CD8-positive, alpha-beta memory T cell (primary cell): ENCODE measurements at regions of chr19 and their contacts with region 1.

Region 1: DNA sequence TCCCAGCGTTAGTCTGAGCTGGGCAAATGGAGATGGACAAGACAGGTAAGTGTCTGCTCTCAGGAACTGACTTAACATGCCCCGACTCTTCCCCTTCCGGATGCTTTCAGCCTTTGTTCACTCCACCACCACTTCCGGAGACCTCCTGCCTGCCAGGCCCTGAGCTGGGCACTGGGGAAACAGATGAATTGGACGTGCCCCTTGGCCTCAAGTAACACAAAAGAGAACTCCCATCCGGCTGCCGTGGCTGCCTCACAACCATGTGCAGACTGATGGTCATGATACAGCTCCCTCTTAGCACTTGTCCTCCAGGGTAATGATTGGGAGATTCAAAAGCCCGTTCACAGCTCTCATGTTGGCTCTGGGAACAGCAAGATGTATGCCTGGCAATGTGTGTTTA is 6.9 kb downstream of the ZNF784 start:
- DNase-seq: no peak
- H3K4me3 ChIP-seq: no peak overlapping the region
- H3K4me3 Mint-ChIP-seq: no peak overlapping the region
- H3K27ac ChIP-seq: no peak overlapping the region
- H3K27ac Mint-ChIP-seq: peak overlapping the region in 2 of 8 donors; percentile 26 to 80
- H3K4me1 ChIP-seq: peaks cover 11% of the 10 kb centered on the region
- H3K4me1 Mint-ChIP-seq: peaks cover 18 to 30% (median 23%) of the 10 kb centered on the region in 3 donors
- H3K27me3 ChIP-seq: no peaks in the 10 kb centered on the region
- H3K27me3 Mint-ChIP-seq: no peaks in the 10 kb centered on the region

Region 2: GRCh38 chr19:55432241-55432959 is 185.0 kb before region 1 on chr19:
- CTCF ChIA-PET with region 1: no interaction called
- POLR2A ChIA-PET with region 1: no interaction called
- DNase-seq: no peak
- H3K4me3 ChIP-seq: no peak overlapping the region
- H3K4me3 Mint-ChIP-seq: no peak overlapping the region
- H3K27ac ChIP-seq: no peak overlapping the region
- H3K27ac Mint-ChIP-seq: no peak overlapping the region
- H3K4me1 ChIP-seq: no peaks in the 10 kb centered on the region
- H3K4me1 Mint-ChIP-seq: peaks cover 0 to 7% (median 0%) of the 10 kb centered on the region in 3 donors
- H3K27me3 ChIP-seq: peaks cover 35% of the 10 kb centered on the region
- H3K27me3 Mint-ChIP-seq: peaks cover 39 to 58% of the 10 kb centered on the region in 2 donors

Region 3: DNA sequence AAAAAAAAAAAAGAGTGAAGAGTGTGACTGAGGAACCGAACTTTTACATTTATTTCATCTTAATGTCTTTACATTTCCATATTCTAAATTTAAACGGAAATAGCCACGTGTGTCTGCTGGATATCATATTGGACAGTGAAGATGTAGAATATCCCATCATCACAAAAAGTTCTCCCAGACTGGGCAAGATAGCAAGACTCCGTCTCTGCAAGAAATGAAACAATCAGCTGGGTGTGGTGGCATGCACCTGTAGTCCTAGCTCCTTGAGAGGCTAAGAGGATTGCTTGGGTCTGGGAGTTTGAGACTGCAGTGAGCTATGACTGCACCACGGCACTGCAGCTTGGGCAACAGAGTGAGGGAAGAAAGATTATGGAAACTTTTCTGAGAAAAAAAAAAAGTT is 40.7 kb before region 1 on chr19:
- CTCF ChIA-PET with region 1: no interaction called
- POLR2A ChIA-PET with region 1: interaction called, 10 read pairs
- DNase-seq: no peak
- H3K4me3 ChIP-seq: no peak overlapping the region
- H3K4me3 Mint-ChIP-seq: peak overlapping the region; percentile 2 to 81 (median 57)
- H3K27ac ChIP-seq: no peak overlapping the region
- H3K27ac Mint-ChIP-seq: no peak overlapping the region
- H3K4me1 ChIP-seq: peaks cover 13% of the 10 kb centered on the region
- H3K4me1 Mint-ChIP-seq: peaks cover 16 to 20% (median 19%) of the 10 kb centered on the region in 3 donors
- H3K27me3 ChIP-seq: no peaks in the 10 kb centered on the region
- H3K27me3 Mint-ChIP-seq: peaks cover 0 to 2% of the 10 kb centered on the region in 2 donors

Region 4: GRCh38 chr19:55599468-55600279 is 17.8 kb before region 1 on chr19 and contains the start of gene FIZ1:
- CTCF ChIA-PET with region 1: no interaction called
- POLR2A ChIA-PET with region 1: no interaction called
- DNase-seq: peak; percentile 92 to 98 (median 96)
- H3K4me3 ChIP-seq: peak within 1 kb of the TSS; percentile 99
- H3K4me3 Mint-ChIP-seq: peak within 1 kb of the TSS; percentile 95 to 100 (median 98)
- H3K27ac ChIP-seq: peak within 1 kb of the TSS; percentile 91
- H3K27ac Mint-ChIP-seq: peak within 1 kb of the TSS; percentile 91 to 100 (median 98)
- H3K4me1 ChIP-seq: peaks cover 20% of the 10 kb centered on the region
- H3K4me1 Mint-ChIP-seq: peaks cover 21 to 31% (median 28%) of the 10 kb centered on the region in 3 donors
- H3K27me3 ChIP-seq: no peaks in the 10 kb centered on the region
- H3K27me3 Mint-ChIP-seq: peaks cover 0 to 1% of the 10 kb centered on the region in 2 donors
- total RNA-seq, gene FIZ1: 23.9 to 25.8 TPM